Activated CD4-positive, alpha-beta T cell treated with anti-CD3 and anti-CD28 coated beads, Interleukin-2, amount 10 ng/mL, durations not matched to agents 24 days and 14 days (primary cell): ENCODE measurements at regions of chr13 and their contacts with region 1.

Region 1: GRCh38 chr13:106536244-106537034 is 977 bp upstream of the EFNB2 start:
- DNase-seq: peak; percentile 96
- H3K4me3 Mint-ChIP-seq: peak overlapping the region; percentile 82
- H3K27ac Mint-ChIP-seq: peak overlapping the region; percentile 84
- H3K4me1 Mint-ChIP-seq: peaks cover 15% of the 10 kb centered on the region
- H3K27me3 Mint-ChIP-seq: peaks cover 27% of the 10 kb centered on the region

Region 2: DNA sequence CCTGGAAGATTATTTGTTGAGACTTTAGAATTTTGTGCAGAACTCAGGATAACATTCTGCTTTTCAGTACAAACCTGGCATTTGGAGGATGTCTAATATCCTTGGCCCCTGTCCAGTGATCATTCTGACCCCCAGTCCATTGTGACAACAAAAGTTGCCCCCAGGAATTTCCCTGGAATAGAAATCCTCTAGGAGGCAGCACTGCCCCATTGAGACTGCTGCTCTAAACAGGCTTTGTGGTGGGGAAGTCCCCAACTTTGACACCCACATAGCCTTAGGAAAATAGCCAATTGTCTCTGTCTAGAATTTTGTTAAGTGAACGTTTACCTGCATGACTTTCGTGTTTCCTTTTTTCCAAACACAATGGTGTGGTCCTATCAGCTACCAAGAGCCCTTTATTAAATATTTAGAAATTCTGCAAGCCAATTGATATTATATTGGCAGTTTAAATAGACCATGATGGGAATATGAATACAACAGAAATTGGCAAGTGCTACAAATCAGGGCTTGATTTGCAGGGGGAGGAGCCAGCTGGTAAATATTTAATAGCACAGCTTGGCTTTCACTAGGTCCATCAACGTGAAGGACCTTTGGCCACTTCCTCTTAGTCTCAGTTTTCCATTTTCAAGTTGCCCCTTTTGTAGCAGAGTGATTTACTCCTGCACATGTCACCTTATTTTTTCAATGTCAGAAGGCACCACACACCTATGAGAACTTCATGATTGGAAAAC is 452.7 kb before region 1 on chr13:
- intact Hi-C with region 1: loop called (anchors 5 kb)
- DNase-seq: peak; percentile 55
- H3K4me3 Mint-ChIP-seq: no peak overlapping the region
- H3K27ac Mint-ChIP-seq: no peak overlapping the region
- H3K4me1 Mint-ChIP-seq: no peaks in the 10 kb centered on the region
- H3K27me3 Mint-ChIP-seq: no peaks in the 10 kb centered on the region

Region 3: GRCh38 chr13:106561551-106562170 is 25.2 kb after region 1 on chr13:
- intact Hi-C with region 1: loop called (anchors 2 kb)
- DNase-seq: peak; percentile 76
- H3K4me3 Mint-ChIP-seq: peak overlapping the region; percentile 13
- H3K27ac Mint-ChIP-seq: peak overlapping the region; percentile 79
- H3K4me1 Mint-ChIP-seq: peaks cover 57% of the 10 kb centered on the region
- H3K27me3 Mint-ChIP-seq: no peaks in the 10 kb centered on the region

Region 4: GRCh38 chr13:106619688-106620555 is 83.5 kb after region 1 on chr13:
- intact Hi-C with region 1: loop called (anchors 5 kb)
- DNase-seq: peak; percentile 71
- H3K4me3 Mint-ChIP-seq: no peak overlapping the region
- H3K27ac Mint-ChIP-seq: no peak overlapping the region
- H3K4me1 Mint-ChIP-seq: peaks cover 2% of the 10 kb centered on the region
- H3K27me3 Mint-ChIP-seq: peaks cover 23% of the 10 kb centered on the region